Activated CD4-positive, alpha-beta T cell treated with anti-CD3 and anti-CD28 coated beads, Interleukin-2, amount 10 ng/mL, durations not matched to agents 24 days and 14 days (primary cell): ENCODE measurements at regions of chr9 and their contacts with region 1.

Region 1: DNA sequence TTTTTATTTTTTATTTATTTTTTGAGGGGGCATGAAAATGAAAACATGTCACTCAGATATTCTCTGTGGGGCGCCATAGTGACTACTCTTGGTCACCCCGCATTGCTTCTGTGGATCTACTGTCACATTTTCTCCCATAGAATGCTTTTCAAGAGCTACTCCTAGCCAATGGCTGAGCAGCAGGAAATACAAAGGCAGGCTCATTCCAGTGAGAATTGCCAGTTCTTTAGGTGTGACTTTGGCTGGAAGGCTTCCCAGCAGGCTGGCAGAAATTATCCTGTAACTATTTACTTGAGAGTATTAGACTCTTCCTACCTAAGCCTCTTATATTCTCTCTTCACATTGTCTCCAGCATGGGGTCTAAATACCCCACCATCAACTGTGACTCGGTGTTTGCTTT is 21.0 kb upstream of the PTPRD start:
- DNase-seq: no peak
- H3K4me3 Mint-ChIP-seq: no peak overlapping the region
- H3K27ac Mint-ChIP-seq: no peak overlapping the region
- H3K4me1 Mint-ChIP-seq: no peaks in the 10 kb centered on the region
- H3K27me3 Mint-ChIP-seq: no peaks in the 10 kb centered on the region

Region 2: DNA sequence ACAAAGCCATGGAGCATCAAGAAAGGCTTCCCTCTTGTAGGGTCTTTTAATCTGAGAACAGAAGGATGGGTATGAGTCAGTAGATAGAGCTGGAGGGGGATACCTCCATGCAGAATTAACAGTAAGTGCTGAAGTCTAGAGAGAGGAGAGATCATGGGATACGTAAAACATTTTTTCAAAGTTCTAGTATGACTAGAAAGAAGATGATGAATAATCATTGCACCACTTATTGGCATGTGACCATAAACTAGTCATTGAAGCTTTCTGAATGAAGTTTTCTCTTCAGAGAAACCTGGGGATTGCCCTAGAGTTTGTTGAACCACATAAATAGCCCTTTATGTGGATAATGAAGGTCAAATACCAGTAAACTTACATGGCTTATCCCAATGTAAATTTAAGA is 27.6 kb after region 1 on chr9:
- intact Hi-C with region 1: loop called (anchors 5 kb)
- DNase-seq: no peak
- H3K4me3 Mint-ChIP-seq: no peak overlapping the region
- H3K27ac Mint-ChIP-seq: no peak overlapping the region
- H3K4me1 Mint-ChIP-seq: no peaks in the 10 kb centered on the region
- H3K27me3 Mint-ChIP-seq: no peaks in the 10 kb centered on the region

Region 3: DNA sequence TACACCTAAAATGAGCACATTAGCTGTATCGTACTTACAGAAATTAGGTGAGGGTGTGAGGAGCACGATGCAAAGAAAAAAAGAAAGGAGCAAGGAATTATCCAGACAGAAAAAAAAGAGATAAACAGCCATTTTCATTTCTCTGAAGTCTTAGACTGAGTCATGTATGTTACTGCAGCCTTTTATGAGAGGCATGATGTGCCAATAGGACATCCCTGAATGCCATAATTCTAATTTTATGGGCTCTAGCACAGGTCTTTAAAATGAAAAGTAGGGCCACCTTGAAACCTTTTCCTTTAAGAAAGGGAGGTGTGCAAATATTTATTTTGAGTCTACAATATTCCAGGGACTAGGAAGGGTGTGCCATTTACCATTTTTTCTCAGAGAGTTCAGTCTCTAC is 53.2 kb after region 1 on chr9:
- intact Hi-C with region 1: loop called (anchors 10 kb)
- DNase-seq: no peak
- H3K4me3 Mint-ChIP-seq: no peak overlapping the region
- H3K27ac Mint-ChIP-seq: no peak overlapping the region
- H3K4me1 Mint-ChIP-seq: no peaks in the 10 kb centered on the region
- H3K27me3 Mint-ChIP-seq: no peaks in the 10 kb centered on the region

Region 4: GRCh38 chr9:10704720-10705119 is 70.9 kb after region 1 on chr9:
- intact Hi-C with region 1: no loop called
- DNase-seq: no peak
- H3K4me3 Mint-ChIP-seq: no peak overlapping the region
- H3K27ac Mint-ChIP-seq: no peak overlapping the region
- H3K4me1 Mint-ChIP-seq: no peaks in the 10 kb centered on the region
- H3K27me3 Mint-ChIP-seq: no peaks in the 10 kb centered on the region